Activated CD8-positive, alpha-beta memory T cell treated with anti-CD3 and anti-CD28 coated beads, Interleukin-2, amount 10 ng/mL, durations not matched to agents 7 days and 5 days (primary cell): ENCODE measurements at regions of chr2 and their contacts with region 1.

Region 1: DNA sequence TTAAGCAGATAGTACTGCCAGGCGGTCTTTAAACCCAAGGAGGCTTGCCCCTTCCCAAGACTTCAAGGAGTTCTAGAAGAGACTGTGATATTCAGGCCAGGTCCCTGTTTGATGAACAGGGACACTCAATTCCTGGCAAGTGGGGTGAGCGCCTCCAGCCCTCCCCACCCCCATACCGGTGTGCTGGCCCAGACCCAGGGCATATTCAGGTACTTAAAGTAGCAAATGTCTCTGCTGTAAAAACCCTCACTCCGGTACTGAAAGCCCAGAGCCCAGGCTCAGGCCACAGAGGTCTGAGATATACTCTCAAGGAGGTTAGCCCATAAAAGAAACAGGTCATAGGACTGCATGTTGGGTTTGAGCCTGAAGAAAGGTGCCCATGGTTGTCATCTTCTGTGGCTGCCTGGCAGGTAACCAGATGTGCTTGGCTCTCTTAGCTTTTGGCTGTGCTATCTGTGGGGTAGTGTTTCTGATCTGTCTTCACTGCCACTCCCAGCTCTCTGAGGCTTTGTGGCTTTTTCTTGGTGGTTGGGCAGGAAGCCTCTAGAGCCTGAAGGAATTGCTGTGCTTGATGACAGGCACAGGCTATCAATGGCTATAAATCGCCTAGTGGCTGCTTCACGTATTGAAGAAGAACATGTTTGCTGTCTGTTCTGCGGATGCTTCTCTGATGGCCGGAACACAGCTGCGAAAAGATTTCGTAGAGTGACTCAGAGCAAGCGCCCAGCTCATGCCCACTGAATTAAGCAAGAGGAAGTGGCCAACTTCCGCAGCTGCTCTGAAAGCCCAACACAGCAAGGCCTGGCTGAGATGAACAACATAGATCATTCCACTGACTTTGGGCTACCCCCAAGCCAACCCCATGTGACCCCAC is 63.3 kb upstream of the ALPP start:
- DNase-seq: peak; percentile 94
- ATAC-seq: peak; percentile 94
- H3K4me3 Mint-ChIP-seq: peak overlapping the region; percentile 46
- H3K27ac Mint-ChIP-seq: peak overlapping the region; percentile 93
- H3K4me1 Mint-ChIP-seq: peaks cover 67% of the 10 kb centered on the region
- H3K27me3 Mint-ChIP-seq: no peaks in the 10 kb centered on the region

Region 2: DNA sequence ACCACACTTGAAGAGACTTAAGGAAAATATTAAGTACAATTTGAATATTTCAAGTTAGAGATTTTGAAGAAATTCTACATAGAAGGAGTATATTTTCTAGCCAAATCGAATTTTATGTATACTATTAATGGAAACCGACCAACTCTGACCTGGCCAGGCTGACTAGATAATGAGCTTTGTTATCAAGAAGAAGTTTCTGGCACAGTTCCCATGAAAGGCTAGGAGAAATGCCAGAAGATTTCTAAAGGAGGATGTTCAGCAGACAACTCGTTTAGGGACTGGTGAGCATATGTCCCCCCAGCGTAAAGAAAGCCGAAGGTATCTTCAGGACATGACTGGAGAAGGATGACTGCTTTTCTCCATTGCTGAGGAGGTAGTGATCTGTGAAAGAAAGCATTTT is 226.5 kb before region 1 on chr2:
- CTCF ChIA-PET with region 1: no interaction called
- DNase-seq: no peak
- ATAC-seq: no peak
- H3K4me3 Mint-ChIP-seq: no peak overlapping the region
- H3K27ac Mint-ChIP-seq: no peak overlapping the region
- H3K4me1 Mint-ChIP-seq: peaks cover 2% of the 10 kb centered on the region
- H3K27me3 Mint-ChIP-seq: no peaks in the 10 kb centered on the region

Region 3: GRCh38 chr2:232292395-232293154 is 22.7 kb before region 1 on chr2:
- CTCF ChIA-PET with region 1: interaction called, 69 read pairs
- DNase-seq: peak; percentile 78
- ATAC-seq: peak; percentile 84
- H3K4me3 Mint-ChIP-seq: no peak overlapping the region
- H3K27ac Mint-ChIP-seq: no peak overlapping the region
- H3K4me1 Mint-ChIP-seq: no peaks in the 10 kb centered on the region
- H3K27me3 Mint-ChIP-seq: no peaks in the 10 kb centered on the region